ENCODE measurements at regions of chr18 and their contacts with region 1.

Region 1: DNA sequence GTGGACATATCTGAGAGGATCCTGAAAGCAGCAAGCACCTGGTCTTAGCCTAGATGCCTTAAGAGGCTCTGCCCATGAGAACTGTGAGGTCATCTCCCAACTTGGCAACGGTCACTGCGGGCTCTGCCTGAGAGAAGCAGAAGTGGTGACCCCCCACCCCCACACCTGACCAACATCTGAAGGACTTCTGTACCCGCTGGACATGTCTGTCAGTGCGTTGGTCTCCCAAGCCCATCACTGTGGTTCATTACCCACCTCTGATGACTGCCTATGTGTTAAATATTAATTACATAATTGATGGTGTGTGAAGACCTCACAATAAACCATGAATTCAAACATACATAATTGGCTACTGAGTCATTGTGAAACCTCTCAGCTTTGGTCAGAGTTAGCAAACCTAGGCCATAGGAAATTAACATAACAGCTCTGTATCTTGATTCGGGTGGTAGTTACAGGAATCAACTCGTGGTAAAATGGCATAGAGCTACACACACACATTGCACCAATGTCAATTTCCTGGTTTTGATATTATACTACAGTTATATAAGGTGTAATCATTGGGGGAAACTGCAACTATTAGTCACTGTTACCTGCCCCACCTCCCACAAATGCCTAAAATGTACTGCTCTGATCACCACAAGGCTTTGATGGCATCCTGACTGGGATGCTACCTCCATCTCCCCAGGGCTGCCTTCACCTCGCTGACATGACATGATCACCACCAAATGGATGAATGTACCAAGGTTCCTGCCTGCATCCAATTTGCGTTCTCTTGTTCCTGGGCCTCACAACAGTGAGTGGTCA is 4.3 kb upstream of the GALNT1 start:
- DNase-seq: no peak
- H3K4me3 ChIP-seq: no peak overlapping the region
- H3K27ac ChIP-seq: no peak overlapping the region
- H3K4me1 ChIP-seq: peaks cover 3 to 11% of the 10 kb centered on the region in 2 donors
- H3K27me3 ChIP-seq: no peaks in the 10 kb centered on the region
- CTCF ChIP-seq: no peak
- POLR2A ChIP-seq: no peak

Region 2: DNA sequence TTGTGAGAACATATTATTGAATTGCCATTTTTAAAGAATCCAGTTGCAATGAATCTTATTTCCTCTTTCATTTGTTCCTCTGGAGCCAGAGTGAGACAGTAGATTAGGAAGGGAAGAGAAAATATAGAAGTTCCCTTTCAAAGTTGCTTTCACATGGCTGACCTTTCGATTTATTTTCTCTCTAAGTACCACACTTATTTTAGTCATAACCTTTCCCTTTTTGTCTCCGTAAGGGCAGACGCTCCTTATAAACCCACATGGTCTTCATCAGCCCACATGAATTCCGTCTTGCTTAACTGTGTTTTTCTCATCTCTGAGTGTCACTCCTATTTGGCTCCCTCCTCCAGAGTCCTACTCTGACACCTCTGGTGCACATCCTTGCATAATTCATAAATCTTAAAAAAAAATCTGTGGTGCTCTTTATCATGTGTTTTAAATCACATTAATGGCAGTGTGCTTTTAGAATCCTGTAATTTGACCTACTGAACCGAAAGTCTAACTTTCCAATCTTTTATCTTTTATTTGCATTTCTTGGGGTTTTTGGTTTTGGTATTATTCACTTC is 161.7 kb before region 1 on chr18:
- intact Hi-C with region 1: loop called in 1 of 2 experiments (anchors 10 kb)
- DNase-seq: no peak
- H3K4me3 ChIP-seq: no peak overlapping the region
- H3K27ac ChIP-seq: no peak overlapping the region
- H3K4me1 ChIP-seq: peaks cover 0 to 10% of the 10 kb centered on the region in 2 donors
- H3K27me3 ChIP-seq: no peaks in the 10 kb centered on the region
- CTCF ChIP-seq: no peak
- POLR2A ChIP-seq: no peak

Measured in adrenal gland (tissue), 19 donors.